ENCODE measurements at regions of chr3 and their contacts with region 1.

Region 1: DNA sequence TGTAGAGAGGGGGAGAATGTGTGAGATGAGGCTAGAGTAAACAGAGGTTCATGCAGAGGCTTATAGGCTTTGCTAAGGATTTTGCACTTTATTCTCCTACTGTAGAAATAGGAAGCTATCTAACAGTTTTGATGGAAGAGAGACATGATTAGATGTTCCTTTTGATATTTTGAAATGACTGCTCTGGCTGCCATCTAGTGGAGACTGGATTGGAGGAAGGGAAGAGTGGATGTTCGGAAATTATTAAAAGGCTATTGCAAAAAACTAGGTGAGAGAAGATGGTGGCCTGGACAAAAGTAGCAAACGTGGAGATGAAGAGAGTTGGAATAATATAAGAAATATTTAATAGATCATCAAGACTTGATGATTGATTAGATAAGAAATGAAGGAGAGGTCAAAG is 42.2 kb downstream of the SYN2 start:
- DNase-seq: no peak

Region 2: GRCh38 chr3:11846281-11847034 is 199.9 kb before region 1 on chr3 and contains the start of gene TAMM41:
- intact Hi-C with region 1: loop called (anchors 5 kb)
- DNase-seq: peak; percentile 85 to 99 (median 94)

Region 3: DNA sequence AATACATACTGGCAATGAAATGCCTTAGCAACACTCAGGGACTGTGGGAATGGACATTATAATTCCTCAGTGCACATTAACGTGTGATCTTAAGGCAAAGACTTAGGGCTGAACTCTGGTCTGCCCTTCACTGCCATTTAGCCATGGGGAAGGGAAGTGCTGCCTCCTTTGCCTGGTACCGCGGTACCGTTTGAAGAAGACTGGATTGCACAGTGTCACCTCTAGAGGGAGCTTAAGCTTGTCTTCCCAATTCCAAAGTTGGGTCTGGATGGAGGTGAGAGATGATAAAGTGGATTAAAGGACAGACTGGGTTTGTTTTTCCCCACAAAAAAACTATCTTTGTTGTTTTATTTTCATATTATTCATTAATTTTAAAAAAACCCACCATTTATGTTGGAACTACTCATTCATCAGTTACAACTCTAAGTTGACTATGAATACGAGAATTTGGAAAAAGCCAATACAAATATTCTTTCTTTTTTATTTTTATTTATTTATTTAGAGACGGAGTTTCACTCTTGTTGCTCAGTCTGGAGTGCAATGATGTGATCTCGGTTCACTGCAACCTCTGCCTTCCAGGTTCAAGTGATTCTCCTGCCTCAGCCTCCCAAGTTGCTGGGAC is 102.2 kb before region 1 on chr3:
- intact Hi-C with region 1: loop called (anchors 2 kb)
- DNase-seq: peak in 1 of 10 donors; percentile 15

Region 4: GRCh38 chr3:12395349-12396012 is 349.1 kb after region 1 on chr3:
- intact Hi-C with region 1: no loop called
- DNase-seq: no peak

Measured in posterior cingulate gyrus (tissue), 11 donors.